OCI-LY7 (cell line): ENCODE measurements at regions of chr11 and their contacts with region 1.

Region 1: GRCh38 chr11:62753736-62754603 is at the start of gene ZBTB3:
- DNase-seq: peak; percentile 99
- H3K4me3 ChIP-seq: peak within 1 kb of the TSS; percentile 71
- H3K27ac ChIP-seq: peak within 1 kb of the TSS; percentile 60
- H3K4me1 ChIP-seq: peaks cover 20% of the 10 kb centered on the region
- CTCF ChIP-seq: no peak
- total RNA-seq, gene ZBTB3: 11.1 and 11.8 TPM in 2 replicates

Region 2: GRCh38 chr11:62771144-62772021 is 17.4 kb after region 1 on chr11 and contains the start of gene TAF6L:
- CTCF ChIA-PET with region 1: no interaction called
- POLR2A ChIA-PET with region 1: interaction called, 16 read pairs
- intact Hi-C with region 1: no loop called
- DNase-seq: peak; percentile 94
- H3K4me3 ChIP-seq: peak within 1 kb of the TSS; percentile 77
- H3K27ac ChIP-seq: peak within 1 kb of the TSS; percentile 71
- H3K4me1 ChIP-seq: peaks cover 32% of the 10 kb centered on the region
- CTCF ChIP-seq: no peak
- total RNA-seq, gene TAF6L: 23.7 and 26.1 TPM in 2 replicates

Region 3: DNA sequence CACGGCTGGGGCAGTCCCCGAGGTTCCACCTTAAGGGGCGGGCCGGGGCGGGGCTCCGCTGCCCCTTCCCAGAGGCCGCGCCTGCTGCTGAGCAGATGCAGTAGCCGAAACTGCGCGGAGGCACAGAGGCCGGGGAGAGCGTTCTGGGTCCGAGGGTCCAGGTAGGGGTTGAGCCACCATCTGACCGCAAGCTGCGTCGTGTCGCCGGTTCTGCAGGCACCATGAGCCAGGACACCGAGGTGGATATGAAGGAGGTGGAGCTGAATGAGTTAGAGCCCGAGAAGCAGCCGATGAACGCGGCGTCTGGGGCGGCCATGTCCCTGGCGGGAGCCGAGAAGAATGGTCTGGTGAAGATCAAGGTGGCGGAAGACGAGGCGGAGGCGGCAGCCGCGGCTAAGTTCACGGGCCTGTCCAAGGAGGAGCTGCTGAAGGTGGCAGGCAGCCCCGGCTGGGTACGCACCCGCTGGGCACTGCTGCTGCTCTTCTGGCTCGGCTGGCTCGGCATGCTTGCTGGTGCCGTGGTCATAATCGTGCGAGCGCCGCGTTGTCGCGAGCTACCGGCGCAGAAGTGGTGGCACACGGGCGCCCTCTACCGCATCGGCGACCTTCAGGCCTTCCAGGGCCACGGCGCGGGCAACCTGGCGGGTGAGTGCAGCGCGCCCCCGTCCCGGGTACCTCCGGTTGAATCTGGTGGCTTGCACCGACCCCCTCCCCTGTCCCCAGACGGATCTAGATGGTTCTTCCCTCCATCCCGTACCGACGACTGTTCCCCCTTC is 127.0 kb after region 1 on chr11 and contains the start of gene SLC3A2:
- CTCF ChIA-PET with region 1: interaction called, 3 read pairs
- POLR2A ChIA-PET with region 1: interaction called, 13 read pairs
- intact Hi-C with region 1: no loop called
- DNase-seq: peak; percentile 89
- H3K4me3 ChIP-seq: peak within 1 kb of the TSS; percentile 73
- H3K27ac ChIP-seq: peak within 1 kb of the TSS; percentile 74
- H3K4me1 ChIP-seq: peaks cover 28% of the 10 kb centered on the region
- CTCF ChIP-seq: peak; percentile 78
- total RNA-seq, gene SLC3A2: 289 and 291 TPM in 2 replicates